Caco-2 (cell line): ENCODE measurements at regions of chr20 and their contacts with region 1.

Region 1: DNA sequence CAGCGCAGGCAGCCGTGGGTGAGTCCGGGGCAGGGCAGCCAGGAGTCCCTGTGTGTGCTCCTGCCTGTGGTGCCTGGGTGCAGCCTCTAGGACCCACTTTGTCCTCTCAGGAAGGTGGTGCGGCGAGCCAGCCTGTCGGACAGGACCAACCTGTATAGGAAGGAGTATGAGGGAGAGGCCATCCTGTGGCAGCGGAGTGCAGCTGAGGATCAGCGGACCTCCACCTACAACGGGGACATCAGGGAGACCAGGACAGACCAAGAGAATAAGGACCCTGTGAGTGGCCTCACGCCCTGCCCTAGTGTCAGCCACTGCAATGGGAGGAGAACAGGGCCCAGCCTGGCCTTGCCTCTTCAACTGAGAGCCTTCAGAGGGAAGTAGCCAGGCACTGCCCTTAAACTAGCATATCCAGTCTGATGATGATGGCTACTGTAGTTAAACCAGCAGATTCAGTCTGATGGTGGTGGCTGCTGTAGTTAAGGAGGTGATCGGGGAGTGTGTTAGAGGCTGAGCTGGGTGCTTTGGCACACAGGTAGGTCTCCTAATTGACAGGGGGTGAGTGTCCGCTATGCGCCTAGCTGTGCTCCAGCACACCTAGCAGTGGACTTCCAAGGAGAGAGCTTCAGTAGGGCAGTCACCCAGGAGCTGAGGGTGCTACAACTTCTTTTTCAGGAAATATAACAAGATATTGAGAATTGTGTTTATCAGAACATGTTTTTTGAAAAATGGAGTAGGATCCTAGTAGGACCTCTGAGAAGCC is 18.1 kb upstream of the FAM83D start:
- DNase-seq: no peak
- H3K4me3 ChIP-seq: no peak overlapping the region
- H3K4me3 Mint-ChIP-seq: no peak overlapping the region
- H3K27ac Mint-ChIP-seq: no peak overlapping the region
- H3K4me1 ChIP-seq: peaks cover 5% of the 10 kb centered on the region
- H3K4me1 Mint-ChIP-seq: peaks cover under 1% of the 10 kb centered on the region
- H3K27me3 ChIP-seq: no peaks in the 10 kb centered on the region
- H3K27me3 Mint-ChIP-seq: peaks cover 7% of the 10 kb centered on the region
- CTCF ChIP-seq: no peak

Region 2: GRCh38 chr20:38893565-38894090 is 14.5 kb before region 1 on chr20:
- CTCF ChIA-PET with region 1: interaction called, 7 read pairs
- POLR2A ChIA-PET with region 1: no interaction called
- intact Hi-C with region 1: loop called (anchors 1 kb)
- DNase-seq: peak; percentile 84 to 91
- H3K4me3 ChIP-seq: peak overlapping the region; percentile 27
- H3K4me3 Mint-ChIP-seq: peak overlapping the region; percentile 60
- H3K27ac Mint-ChIP-seq: no peak overlapping the region
- H3K4me1 ChIP-seq: peaks cover 3% of the 10 kb centered on the region; the same call in 1 of the 2 replicates
- H3K4me1 Mint-ChIP-seq: peaks cover 17% of the 10 kb centered on the region
- H3K27me3 ChIP-seq: no peaks in the 10 kb centered on the region; the same call in 1 of the 2 replicates
- H3K27me3 Mint-ChIP-seq: peaks cover 6% of the 10 kb centered on the region
- CTCF ChIP-seq: peak; percentile 100

Region 3: GRCh38 chr20:38926142-38926933 is 18.2 kb after region 1 on chr20 and contains the start of gene FAM83D:
- CTCF ChIA-PET with region 1: interaction called, 15 read pairs
- POLR2A ChIA-PET with region 1: interaction called, 12 read pairs
- intact Hi-C with region 1: no loop called
- DNase-seq: peak; percentile 100
- H3K4me3 ChIP-seq: peak within 1 kb of the TSS; percentile 93
- H3K4me3 Mint-ChIP-seq: peak within 1 kb of the TSS; percentile 92
- H3K27ac Mint-ChIP-seq: peak within 1 kb of the TSS; percentile 89
- H3K4me1 ChIP-seq: peaks cover 14% of the 10 kb centered on the region
- H3K4me1 Mint-ChIP-seq: peaks cover 38% of the 10 kb centered on the region
- H3K27me3 ChIP-seq: no peaks in the 10 kb centered on the region
- H3K27me3 Mint-ChIP-seq: no peaks in the 10 kb centered on the region
- CTCF ChIP-seq: no peak
- total RNA-seq, gene FAM83D: 82.4 and 86.3 TPM in 2 replicates

Region 4: GRCh38 chr20:38935285-38935684 is 27.2 kb after region 1 on chr20:
- CTCF ChIA-PET with region 1: no interaction called
- POLR2A ChIA-PET with region 1: interaction called, 3 read pairs
- intact Hi-C with region 1: loop called (anchors 1 kb)
- DNase-seq: peak; percentile 27 to 43
- H3K4me3 ChIP-seq: no peak overlapping the region
- H3K4me3 Mint-ChIP-seq: no peak overlapping the region
- H3K27ac Mint-ChIP-seq: no peak overlapping the region
- H3K4me1 ChIP-seq: peaks cover 14% of the 10 kb centered on the region
- H3K4me1 Mint-ChIP-seq: peaks cover 33% of the 10 kb centered on the region
- H3K27me3 ChIP-seq: no peaks in the 10 kb centered on the region
- H3K27me3 Mint-ChIP-seq: no peaks in the 10 kb centered on the region
- CTCF ChIP-seq: peak; percentile 37